MCF 10A (cell line): ENCODE measurements at regions of chr18 and their contacts with region 1.

Region 1: GRCh38 chr18:31555971-31556747 is 35.5 kb upstream of the TTR start:
- DNase-seq: peak; percentile 77
- H3K4me3 Mint-ChIP-seq: no peak overlapping the region
- H3K27ac Mint-ChIP-seq: no peak overlapping the region
- H3K4me1 Mint-ChIP-seq: peaks cover 6% of the 10 kb centered on the region
- H3K27me3 Mint-ChIP-seq: no peaks in the 10 kb centered on the region
- CTCF ChIP-seq: peak; percentile 76

Region 2: DNA sequence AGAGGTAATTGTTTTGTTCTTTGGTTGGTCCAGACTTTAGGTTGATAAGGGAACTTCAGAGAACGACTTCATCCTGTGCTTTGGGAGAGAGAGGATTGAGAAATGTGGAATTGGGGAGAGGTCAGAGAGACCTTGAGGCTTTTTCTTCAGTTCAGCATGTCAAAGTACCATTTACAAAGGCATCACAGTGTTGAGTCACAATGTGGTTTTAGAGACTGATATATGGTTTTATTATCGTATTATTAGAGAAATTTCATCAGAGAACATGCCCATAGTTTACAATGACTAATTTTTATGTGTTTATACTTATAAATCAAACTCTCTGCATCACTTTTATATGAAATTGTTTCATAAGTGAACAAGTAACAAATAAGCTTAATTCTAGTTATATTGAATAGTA is 1140.3 kb before region 1 on chr18:
- CTCF ChIA-PET with region 1: no interaction called
- POLR2A ChIA-PET with region 1: no interaction called
- intact Hi-C with region 1: no loop called
- DNase-seq: no peak
- H3K4me3 Mint-ChIP-seq: no peak overlapping the region
- H3K27ac Mint-ChIP-seq: no peak overlapping the region
- H3K4me1 Mint-ChIP-seq: peaks cover 5% of the 10 kb centered on the region
- H3K27me3 Mint-ChIP-seq: no peaks in the 10 kb centered on the region
- CTCF ChIP-seq: no peak

Region 3: GRCh38 chr18:30971338-30971956 is 584.7 kb before region 1 on chr18:
- CTCF ChIA-PET with region 1: interaction called, 7 read pairs
- POLR2A ChIA-PET with region 1: no interaction called
- intact Hi-C with region 1: loop called (anchors 1 kb)
- DNase-seq: peak; percentile 52
- H3K4me3 Mint-ChIP-seq: no peak overlapping the region
- H3K27ac Mint-ChIP-seq: no peak overlapping the region
- H3K4me1 Mint-ChIP-seq: no peaks in the 10 kb centered on the region
- H3K27me3 Mint-ChIP-seq: no peaks in the 10 kb centered on the region
- CTCF ChIP-seq: peak; percentile 36

Region 4: DNA sequence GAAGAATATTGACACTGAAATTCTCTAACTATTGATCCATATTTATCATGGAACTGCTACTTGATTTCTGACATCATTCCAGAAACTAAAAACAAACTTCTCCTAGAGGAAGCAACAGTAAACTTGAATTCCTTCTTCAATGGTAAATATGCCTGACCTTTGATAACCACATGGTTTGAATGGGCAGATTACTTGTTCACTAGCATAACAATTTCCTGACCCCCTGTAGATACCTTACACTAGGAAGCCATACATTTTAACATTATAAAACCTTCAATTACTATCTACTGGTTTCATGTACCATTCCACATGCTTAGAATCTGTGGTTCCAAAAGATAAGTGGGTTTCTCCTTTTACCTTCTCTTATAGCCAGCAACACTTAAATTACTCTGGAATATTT is 274.7 kb before region 1 on chr18:
- CTCF ChIA-PET with region 1: no interaction called
- POLR2A ChIA-PET with region 1: no interaction called
- intact Hi-C with region 1: no loop called
- DNase-seq: no peak
- H3K4me3 Mint-ChIP-seq: no peak overlapping the region
- H3K27ac Mint-ChIP-seq: no peak overlapping the region
- H3K4me1 Mint-ChIP-seq: peaks cover 8% of the 10 kb centered on the region
- H3K27me3 Mint-ChIP-seq: no peaks in the 10 kb centered on the region
- CTCF ChIP-seq: no peak

Region 5: DNA sequence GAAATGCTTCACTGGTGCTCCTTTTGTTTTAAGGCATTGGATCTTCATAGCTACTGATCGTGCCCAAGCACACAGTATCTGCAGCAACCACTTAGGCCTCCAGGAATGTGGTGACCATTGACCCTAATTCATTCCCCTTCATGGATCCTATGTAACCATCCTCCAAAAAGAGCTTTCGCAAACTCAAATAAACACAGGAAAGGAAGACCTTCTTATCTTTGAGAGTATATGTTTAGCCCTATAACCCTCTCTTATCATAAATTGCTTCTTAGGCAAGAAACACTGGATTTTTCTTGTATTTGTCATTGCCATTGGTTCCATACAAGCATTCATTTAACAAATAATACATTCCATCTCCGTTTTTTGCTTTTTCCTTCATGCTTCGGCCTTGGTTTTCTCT is 31.4 kb after region 1 on chr18:
- CTCF ChIA-PET with region 1: interaction called, 11 read pairs
- POLR2A ChIA-PET with region 1: interaction called, 3 read pairs
- intact Hi-C with region 1: no loop called
- DNase-seq: no peak
- H3K4me3 Mint-ChIP-seq: no peak overlapping the region
- H3K27ac Mint-ChIP-seq: no peak overlapping the region
- H3K4me1 Mint-ChIP-seq: no peaks in the 10 kb centered on the region
- H3K27me3 Mint-ChIP-seq: no peaks in the 10 kb centered on the region
- CTCF ChIP-seq: no peak

Region 6: DNA sequence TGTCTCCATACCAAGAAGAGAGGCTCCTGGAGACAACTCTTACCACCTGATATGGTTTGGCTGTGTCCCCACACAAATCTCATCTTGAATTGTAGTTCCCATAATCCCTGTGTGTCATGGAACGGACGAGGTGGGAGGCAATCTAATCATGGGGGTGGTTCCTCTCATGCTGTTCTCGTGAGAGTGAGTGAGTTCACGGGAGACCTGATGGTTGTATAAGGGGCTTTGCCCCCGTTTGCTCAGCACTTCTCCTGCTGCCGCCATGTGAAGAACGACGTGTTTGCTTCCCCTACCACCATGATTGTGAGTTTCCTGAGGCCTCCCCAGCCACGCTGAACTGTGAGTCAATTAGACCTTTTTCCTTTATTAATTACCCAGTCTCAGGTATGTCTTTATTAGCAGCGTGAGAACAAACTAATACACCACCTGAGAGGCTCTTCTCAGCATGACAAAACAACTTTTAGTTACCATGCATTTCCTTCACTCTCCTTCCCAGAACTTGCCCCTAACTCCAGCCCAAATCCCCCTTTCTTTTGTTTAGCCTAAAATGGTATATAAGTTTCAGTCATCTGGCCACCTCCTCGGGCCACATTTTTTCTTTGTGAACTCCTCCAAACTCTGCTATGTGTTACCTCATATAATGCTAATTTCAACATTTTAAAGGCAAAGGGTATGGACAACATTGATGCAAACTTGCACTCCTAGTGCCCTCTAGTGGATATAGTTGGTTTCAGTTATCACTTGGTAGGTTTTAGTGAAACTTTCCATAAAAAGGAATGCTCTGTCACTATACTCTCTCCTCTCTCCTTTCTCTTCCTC is 263.2 kb after region 1 on chr18:
- CTCF ChIA-PET with region 1: interaction called, 28 read pairs
- POLR2A ChIA-PET with region 1: interaction called, 3 read pairs
- intact Hi-C with region 1: loop called (anchors 1 kb)
- DNase-seq: peak; percentile 62
- H3K4me3 Mint-ChIP-seq: no peak overlapping the region
- H3K27ac Mint-ChIP-seq: no peak overlapping the region
- H3K4me1 Mint-ChIP-seq: peaks cover 6% of the 10 kb centered on the region
- H3K27me3 Mint-ChIP-seq: no peaks in the 10 kb centered on the region
- CTCF ChIP-seq: peak; percentile 58

Region 7: DNA sequence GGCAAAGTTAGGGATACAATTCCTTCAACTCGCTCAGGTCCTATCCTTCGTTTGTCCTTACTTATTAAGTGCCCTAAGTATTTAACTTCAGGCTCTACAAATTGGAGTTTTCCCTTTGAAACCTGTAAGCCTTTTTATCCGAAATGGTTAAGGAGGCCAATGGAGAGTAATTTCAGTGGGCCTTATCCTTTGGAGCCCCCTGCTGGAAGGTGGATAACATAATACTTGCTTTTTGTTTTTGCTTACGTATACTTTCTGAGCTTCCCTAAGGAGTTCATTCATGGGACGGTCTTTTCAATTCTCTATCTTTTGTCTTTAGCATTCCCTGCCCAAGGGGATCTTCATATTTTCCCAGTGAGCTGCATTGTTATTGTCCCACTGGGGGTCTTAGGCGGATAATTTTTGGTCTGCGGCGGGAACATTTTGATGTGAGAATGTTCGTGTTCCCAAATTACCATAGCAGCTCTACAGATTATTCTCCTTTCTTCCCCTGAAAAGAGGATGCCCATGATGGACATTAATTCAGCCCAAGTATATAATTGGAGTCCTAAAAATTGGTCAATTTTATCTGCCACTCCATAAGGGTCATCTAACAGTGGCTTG is 421.2 kb after region 1 on chr18:
- CTCF ChIA-PET with region 1: interaction called, 3 read pairs
- POLR2A ChIA-PET with region 1: no interaction called
- intact Hi-C with region 1: loop called (anchors 5 kb)
- DNase-seq: peak; percentile 56
- H3K4me3 Mint-ChIP-seq: no peak overlapping the region
- H3K27ac Mint-ChIP-seq: no peak overlapping the region
- H3K4me1 Mint-ChIP-seq: no peaks in the 10 kb centered on the region
- H3K27me3 Mint-ChIP-seq: no peaks in the 10 kb centered on the region
- CTCF ChIP-seq: peak; percentile 56